ENCODE measurements at regions of chr2 and their contacts with region 1.

Region 1: DNA sequence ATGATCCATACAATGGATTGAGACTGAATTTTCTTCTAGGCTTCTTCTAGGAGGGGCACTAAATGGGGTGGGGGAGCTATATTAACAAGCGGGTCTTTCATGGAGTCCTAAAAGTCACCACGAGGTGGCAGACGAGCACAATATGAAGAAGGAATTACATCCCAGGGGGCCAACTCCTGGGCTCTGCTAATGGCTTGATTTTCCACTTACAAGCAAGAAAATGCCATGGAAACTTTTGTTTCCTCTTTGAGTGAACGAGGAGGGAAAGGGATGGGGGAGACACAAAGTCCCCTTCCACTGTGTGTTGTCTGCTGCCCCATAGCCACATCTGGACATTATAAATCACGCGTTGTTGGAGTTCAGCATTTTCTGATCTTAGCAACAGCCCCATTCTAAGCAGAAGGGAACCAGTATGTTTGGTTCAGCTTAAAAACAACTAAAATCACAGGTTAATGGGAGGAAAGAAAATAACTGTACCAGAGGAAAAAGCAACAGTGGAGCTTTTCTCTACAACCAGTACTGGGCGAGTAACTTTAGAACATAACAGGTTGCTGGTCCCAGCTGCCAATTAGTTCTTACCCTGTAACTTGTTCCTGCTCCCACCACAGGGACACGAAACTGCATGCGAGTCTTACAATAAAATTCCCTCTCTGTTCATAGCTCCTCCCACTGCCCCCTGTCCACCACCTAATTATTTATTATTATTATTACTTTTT is 285.0 kb upstream of the PARD3B start:
- DNase-seq: peak; percentile 71
- H3K4me3 Mint-ChIP-seq: no peak overlapping the region
- H3K27ac Mint-ChIP-seq: no peak overlapping the region
- H3K4me1 Mint-ChIP-seq: peaks cover 6% of the 10 kb centered on the region
- H3K27me3 Mint-ChIP-seq: no peaks in the 10 kb centered on the region
- CTCF ChIP-seq: peak; percentile 81

Region 2: DNA sequence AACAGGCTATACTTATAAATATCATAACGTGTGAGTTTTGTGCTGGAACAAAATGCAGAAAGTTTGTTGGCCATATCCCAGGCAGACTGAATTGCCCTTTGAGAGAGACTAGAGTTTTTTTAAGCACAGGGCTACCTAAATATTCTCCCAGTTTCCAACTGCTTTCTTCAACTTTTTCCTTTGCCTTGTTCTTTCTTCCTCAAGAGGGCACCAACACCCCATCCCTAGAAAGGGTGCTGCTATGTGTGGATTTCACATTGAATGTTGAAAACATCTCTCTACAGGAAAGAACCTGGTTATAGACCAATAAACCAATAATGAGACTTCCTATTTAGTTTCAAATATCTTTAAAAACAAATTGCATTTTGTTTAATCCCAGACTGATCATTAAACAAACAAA is 235.8 kb before region 1 on chr2:
- CTCF ChIA-PET with region 1: interaction called, 40 read pairs
- POLR2A ChIA-PET with region 1: interaction called, 3 read pairs
- intact Hi-C with region 1: no loop called
- DNase-seq: peak; percentile 64
- H3K4me3 Mint-ChIP-seq: no peak overlapping the region
- H3K27ac Mint-ChIP-seq: no peak overlapping the region
- H3K4me1 Mint-ChIP-seq: peaks cover 6% of the 10 kb centered on the region
- H3K27me3 Mint-ChIP-seq: no peaks in the 10 kb centered on the region
- CTCF ChIP-seq: peak; percentile 67

Region 3: DNA sequence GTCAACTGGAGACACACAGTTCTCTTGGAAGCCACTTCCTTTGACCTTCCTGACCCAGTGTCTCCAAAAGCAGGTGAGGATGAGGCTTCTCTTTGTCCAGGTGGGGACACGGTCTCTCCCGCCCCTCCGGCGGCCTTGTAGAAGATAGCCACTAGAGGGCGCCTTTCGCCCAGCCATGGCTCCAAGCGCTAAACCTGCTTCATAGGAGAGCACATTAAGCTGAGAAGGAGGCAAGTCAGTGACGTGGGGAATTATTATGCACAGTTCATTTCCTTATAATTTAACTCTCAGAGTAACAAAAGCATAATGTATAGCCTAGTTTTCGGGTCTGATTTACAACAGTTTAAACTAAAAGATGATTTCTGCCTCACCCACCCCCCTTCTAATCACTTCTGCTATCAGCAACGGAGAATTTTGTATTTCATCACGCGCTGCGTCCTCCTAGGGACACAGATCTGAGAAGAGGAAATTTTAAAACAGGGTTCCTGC is 115.0 kb before region 1 on chr2:
- CTCF ChIA-PET with region 1: interaction called, 7 read pairs
- POLR2A ChIA-PET with region 1: no interaction called
- intact Hi-C with region 1: loop called (anchors 5 kb)
- DNase-seq: peak; percentile 81
- H3K4me3 Mint-ChIP-seq: peak overlapping the region; percentile 69
- H3K27ac Mint-ChIP-seq: no peak overlapping the region
- H3K4me1 Mint-ChIP-seq: peaks cover 5% of the 10 kb centered on the region
- H3K27me3 Mint-ChIP-seq: peaks cover 57% of the 10 kb centered on the region
- CTCF ChIP-seq: peak; percentile 90

Region 4: DNA sequence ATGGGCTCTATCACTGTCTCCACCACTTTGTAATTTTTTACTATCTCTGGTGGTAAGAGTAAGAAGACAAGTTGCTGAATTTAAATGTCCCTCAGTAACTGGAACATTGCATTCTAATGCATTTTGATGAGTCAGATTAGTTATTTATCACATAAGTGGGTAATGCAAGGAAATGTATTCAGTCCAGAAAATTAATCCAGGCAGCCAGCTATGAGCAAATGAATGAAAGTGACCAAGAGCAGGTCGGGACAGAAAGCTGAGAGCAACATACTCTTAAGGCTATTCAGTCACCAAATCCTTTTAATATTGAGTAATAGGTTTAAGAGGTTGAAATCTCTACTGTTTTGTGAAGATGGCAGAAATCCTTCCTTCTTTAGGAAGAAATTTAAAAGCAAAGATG is 19.5 kb after region 1 on chr2:
- CTCF ChIA-PET with region 1: interaction called, 29 read pairs
- POLR2A ChIA-PET with region 1: no interaction called
- intact Hi-C with region 1: no loop called
- DNase-seq: no peak
- H3K4me3 Mint-ChIP-seq: no peak overlapping the region
- H3K27ac Mint-ChIP-seq: no peak overlapping the region
- H3K4me1 Mint-ChIP-seq: no peaks in the 10 kb centered on the region
- H3K27me3 Mint-ChIP-seq: no peaks in the 10 kb centered on the region
- CTCF ChIP-seq: no peak

Region 5: DNA sequence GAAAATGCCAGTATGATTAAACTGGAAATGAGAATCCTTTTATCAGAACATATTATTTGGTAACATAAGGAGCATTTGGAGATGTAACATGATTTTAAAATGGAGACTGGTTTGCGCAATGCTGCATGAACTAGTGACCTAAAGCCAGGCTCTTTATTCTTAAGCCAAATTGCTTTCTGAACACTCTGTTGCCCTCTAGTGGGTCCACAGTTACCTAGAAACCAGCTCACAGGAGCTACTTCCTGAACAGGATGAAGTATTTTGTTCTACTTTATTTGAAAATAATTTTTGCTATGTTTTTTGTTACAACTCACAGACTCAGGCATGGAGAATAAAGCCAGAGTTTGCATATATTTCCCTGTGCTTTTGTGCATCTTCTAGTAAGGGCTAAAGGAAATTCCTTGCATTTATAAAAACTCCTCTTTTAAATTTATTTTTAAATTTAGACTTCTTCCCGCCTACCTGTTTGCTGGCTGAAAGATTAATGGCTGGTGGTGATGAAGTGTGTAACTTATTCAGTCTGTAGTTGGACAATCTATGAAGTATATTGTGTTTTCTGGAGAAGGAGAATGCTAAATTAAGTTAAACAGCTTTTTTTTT is 431.7 kb after region 1 on chr2:
- CTCF ChIA-PET with region 1: interaction called, 28 read pairs
- POLR2A ChIA-PET with region 1: no interaction called
- intact Hi-C with region 1: loop called (anchors 1 kb)
- DNase-seq: peak; percentile 86
- H3K4me3 Mint-ChIP-seq: no peak overlapping the region
- H3K27ac Mint-ChIP-seq: no peak overlapping the region
- H3K4me1 Mint-ChIP-seq: peaks cover 4% of the 10 kb centered on the region
- H3K27me3 Mint-ChIP-seq: no peaks in the 10 kb centered on the region
- CTCF ChIP-seq: peak; percentile 76

Measured in MCF 10A (cell line).